HepG2 (cell line): ENCODE measurements at regions of chr1 and their contacts with region 1.

Region 1: GRCh38 chr1:207963427-207964194 is 52.7 kb upstream of the CD34 start:
- DNase-seq: peak; percentile 74
- ATAC-seq: peak; percentile 94
- H3K4me3 ChIP-seq: peak overlapping the region; percentile 6 to 64 (median 43); a peak in 4 of 6 replicates
- H3K27ac ChIP-seq: no peak overlapping the region
- H3K4me1 ChIP-seq: peaks cover 13% of the 10 kb centered on the region
- H3K27me3 ChIP-seq: peaks cover 1 to 27% of the 10 kb centered on the region in 2 experiments; a peak in 2 of 5 replicates
- CTCF ChIP-seq: peak; percentile 94
- EP300 ChIP-seq: peak in 1 of 2 experiments; percentile 52; a peak in 1 of 4 replicates
- POLR2A ChIP-seq: peak; percentile 62 to 73
- RAD21 ChIP-seq: peak; percentile 100

Region 2: GRCh38 chr1:207711285-207711684 is 252.3 kb before region 1 on chr1:
- CTCF ChIA-PET with region 1: no interaction called
- POLR2A ChIA-PET with region 1: no interaction called
- in situ Hi-C with region 1: no loop called
- intact Hi-C with region 1: loop called (anchors 5 kb)
- DNase-seq: peak; percentile 20
- ATAC-seq: peak; percentile 71
- H3K4me3 ChIP-seq: no peak overlapping the region
- H3K27ac ChIP-seq: no peak overlapping the region
- H3K4me1 ChIP-seq: no peaks in the 10 kb centered on the region
- H3K27me3 ChIP-seq: no peaks in the 10 kb centered on the region
- CTCF ChIP-seq: peak; percentile 28; the same call in 1 of the 2 replicates
- EP300 ChIP-seq: no peak
- POLR2A ChIP-seq: no peak
- RAD21 ChIP-seq: no peak

Region 3: GRCh38 chr1:207811920-207812720 is 151.5 kb before region 1 on chr1:
- CTCF ChIA-PET with region 1: interaction called, 9 read pairs
- POLR2A ChIA-PET with region 1: no interaction called
- in situ Hi-C with region 1: no loop called
- intact Hi-C with region 1: loop called (anchors 5 kb)
- DNase-seq: peak; percentile 64
- ATAC-seq: peak; percentile 94
- H3K4me3 ChIP-seq: no peak overlapping the region
- H3K27ac ChIP-seq: no peak overlapping the region
- H3K4me1 ChIP-seq: peaks cover 5% of the 10 kb centered on the region
- H3K27me3 ChIP-seq: no peaks in the 10 kb centered on the region
- CTCF ChIP-seq: peak; percentile 82
- EP300 ChIP-seq: no peak
- POLR2A ChIP-seq: no peak
- RAD21 ChIP-seq: peak; percentile 51; the same call in 1 of the 2 replicates

Region 4: GRCh38 chr1:207885129-207886032 is 78.2 kb before region 1 on chr1:
- CTCF ChIA-PET with region 1: interaction called, 26 read pairs
- POLR2A ChIA-PET with region 1: interaction called, 3 read pairs
- in situ Hi-C with region 1: no loop called
- intact Hi-C with region 1: loop called (anchors 1 kb)
- DNase-seq: peak; percentile 70
- ATAC-seq: peak; percentile 96
- H3K4me3 ChIP-seq: no peak overlapping the region
- H3K27ac ChIP-seq: no peak overlapping the region
- H3K4me1 ChIP-seq: peaks cover 13% of the 10 kb centered on the region; the same call in 1 of the 2 replicates
- H3K27me3 ChIP-seq: peaks cover 2 to 38% of the 10 kb centered on the region in 2 experiments
- CTCF ChIP-seq: peak; percentile 90
- EP300 ChIP-seq: no peak; a peak in 1 of 4 replicates
- POLR2A ChIP-seq: no peak
- RAD21 ChIP-seq: peak; percentile 81; the same call in 1 of the 2 replicates

Region 5: DNA sequence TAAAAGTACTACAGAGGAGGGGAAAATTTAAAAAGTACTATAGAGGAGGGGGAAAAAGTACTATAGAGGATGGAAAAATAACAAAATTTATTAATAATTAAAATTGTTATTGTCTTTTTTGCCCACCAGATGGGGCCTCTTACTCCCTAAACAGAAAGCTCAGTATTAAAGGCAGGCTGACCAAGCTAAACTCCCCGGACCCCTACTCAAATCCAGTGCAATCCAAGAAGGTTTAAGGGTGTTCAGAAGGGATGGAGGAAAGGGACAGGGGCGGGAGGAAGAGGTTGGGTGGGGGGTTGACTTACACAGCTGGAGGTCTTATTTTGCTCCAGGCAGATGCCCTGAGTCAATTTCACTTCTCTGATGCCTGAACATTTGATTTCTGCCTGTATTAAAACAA is 66.4 kb before region 1 on chr1:
- CTCF ChIA-PET with region 1: interaction called, 7 read pairs
- POLR2A ChIA-PET with region 1: no interaction called
- in situ Hi-C with region 1: loop called (anchors 5 kb)
- intact Hi-C with region 1: loop called (anchors 2 kb)
- DNase-seq: no peak
- ATAC-seq: no peak
- H3K4me3 ChIP-seq: no peak overlapping the region
- H3K27ac ChIP-seq: no peak overlapping the region
- H3K4me1 ChIP-seq: no peaks in the 10 kb centered on the region
- H3K27me3 ChIP-seq: no peaks in the 10 kb centered on the region
- CTCF ChIP-seq: no peak
- EP300 ChIP-seq: no peak
- POLR2A ChIP-seq: no peak
- RAD21 ChIP-seq: no peak

Region 6: DNA sequence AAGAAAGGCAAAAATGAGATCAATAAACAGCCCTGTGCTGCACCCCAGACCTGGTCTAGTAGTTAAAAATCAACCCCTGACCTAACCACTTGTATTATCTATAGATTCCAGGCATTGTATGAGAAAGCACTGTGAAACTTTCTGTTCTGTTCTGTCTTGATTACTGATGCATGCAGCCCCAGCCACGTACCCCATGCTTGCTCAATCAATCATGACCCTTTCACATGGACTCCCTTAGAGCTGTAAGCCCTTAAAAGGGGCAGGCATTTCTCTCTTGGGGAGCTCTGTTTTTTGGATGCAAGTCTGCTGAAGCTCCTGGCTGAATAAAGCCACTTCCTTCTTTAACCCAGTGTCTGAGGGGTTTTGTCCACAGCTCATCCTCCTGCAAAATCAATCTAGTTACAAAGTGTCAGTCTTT is 28.4 kb before region 1 on chr1:
- CTCF ChIA-PET with region 1: no interaction called
- POLR2A ChIA-PET with region 1: no interaction called
- in situ Hi-C with region 1: no loop called
- intact Hi-C with region 1: no loop called
- DNase-seq: no peak
- ATAC-seq: no peak
- H3K4me3 ChIP-seq: no peak overlapping the region
- H3K27ac ChIP-seq: no peak overlapping the region
- H3K4me1 ChIP-seq: no peaks in the 10 kb centered on the region
- H3K27me3 ChIP-seq: no peaks in the 10 kb centered on the region
- CTCF ChIP-seq: no peak
- EP300 ChIP-seq: no peak
- POLR2A ChIP-seq: no peak
- RAD21 ChIP-seq: no peak

Region 7: GRCh38 chr1:208115924-208116640 is 152.5 kb after region 1 on chr1:
- CTCF ChIA-PET with region 1: no interaction called
- POLR2A ChIA-PET with region 1: no interaction called
- in situ Hi-C with region 1: no loop called
- intact Hi-C with region 1: no loop called
- DNase-seq: peak; percentile 37
- ATAC-seq: no peak
- H3K4me3 ChIP-seq: no peak overlapping the region
- H3K27ac ChIP-seq: no peak overlapping the region
- H3K4me1 ChIP-seq: peaks cover 61% of the 10 kb centered on the region
- H3K27me3 ChIP-seq: no peaks in the 10 kb centered on the region
- CTCF ChIP-seq: no peak
- EP300 ChIP-seq: no peak
- POLR2A ChIP-seq: no peak
- RAD21 ChIP-seq: no peak

Region 8: DNA sequence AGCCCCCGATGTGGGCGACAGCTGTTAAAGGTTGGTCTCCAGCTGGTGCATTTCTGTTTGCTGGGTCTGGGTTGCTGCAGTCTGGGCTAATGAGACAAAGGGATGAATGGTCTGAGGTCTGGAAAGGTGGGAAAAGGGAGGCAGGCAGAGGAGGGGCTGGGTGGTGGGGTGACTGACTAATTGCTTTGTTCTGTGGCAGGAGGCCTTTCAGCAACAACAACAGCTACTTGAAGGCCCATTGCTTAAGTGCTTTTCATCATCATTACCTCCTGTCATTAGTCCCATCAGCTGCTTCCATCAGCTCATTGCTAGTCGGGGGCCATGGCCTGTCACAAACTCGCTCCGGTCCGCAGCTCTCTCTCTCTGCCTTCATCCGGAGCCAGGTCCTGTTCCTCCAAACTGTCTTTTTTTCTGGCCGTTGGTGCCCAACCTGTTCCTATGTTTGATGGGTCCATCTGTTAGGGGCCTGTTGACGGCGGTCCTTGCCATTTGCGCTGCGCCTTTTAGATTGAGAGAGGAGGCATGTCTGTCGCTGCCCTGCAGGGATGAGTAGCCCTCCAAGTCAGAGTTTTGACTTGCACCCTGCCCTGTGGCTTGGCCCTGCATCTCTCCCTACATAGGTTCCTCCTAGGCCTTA is 386.2 kb after region 1 on chr1:
- CTCF ChIA-PET with region 1: no interaction called
- POLR2A ChIA-PET with region 1: no interaction called
- in situ Hi-C with region 1: no loop called
- intact Hi-C with region 1: no loop called
- DNase-seq: no peak
- ATAC-seq: no peak
- H3K4me3 ChIP-seq: no peak overlapping the region
- H3K27ac ChIP-seq: no peak overlapping the region
- H3K4me1 ChIP-seq: no peaks in the 10 kb centered on the region
- H3K27me3 ChIP-seq: no peaks in the 10 kb centered on the region; a peak in 1 of 5 replicates
- CTCF ChIP-seq: no peak
- EP300 ChIP-seq: no peak
- POLR2A ChIP-seq: no peak
- RAD21 ChIP-seq: no peak